Heart left ventricle (tissue), 16 donors: ENCODE measurements at regions of chr2 and their contacts with region 1.

Region 1: DNA sequence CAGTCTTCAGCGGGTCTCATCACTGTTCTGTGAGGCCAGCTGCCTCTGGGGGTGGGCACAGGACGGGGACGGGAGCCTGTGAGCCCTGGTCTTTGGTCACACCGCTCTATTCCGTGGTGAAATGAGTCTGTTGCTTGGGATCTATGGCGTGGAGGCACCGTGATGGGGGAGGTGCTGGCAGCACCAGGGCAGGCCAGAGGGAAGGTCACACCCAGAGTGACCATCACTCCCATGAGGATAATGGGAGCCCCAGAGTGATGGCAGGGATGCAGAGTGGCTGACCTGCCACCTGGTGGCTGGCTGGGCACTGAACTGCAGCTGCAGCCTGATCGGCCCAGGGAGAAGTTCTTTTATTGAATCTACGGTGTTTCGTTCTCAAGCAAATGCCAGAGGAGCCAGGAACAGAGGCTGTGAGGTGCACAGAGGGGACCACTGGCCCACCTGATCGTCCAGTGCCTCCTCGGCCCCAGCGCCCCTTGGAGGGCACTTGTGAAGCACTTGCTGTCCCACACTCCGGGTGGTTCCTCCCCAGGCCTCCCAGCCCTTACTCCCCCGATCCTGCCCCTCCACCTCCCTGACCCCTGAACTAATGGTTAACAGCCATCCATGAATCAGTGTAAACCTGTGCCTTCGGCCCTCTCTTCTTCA is 17.9 kb downstream of the KCNIP3 start:
- DNase-seq: peak in 1 of 5 donors; percentile 63
- ATAC-seq: peak in 3 of 4 donors; percentile 50 to 64 (median 61)
- H3K4me3 ChIP-seq: no peak overlapping the region
- H3K27ac ChIP-seq: no peak overlapping the region
- H3K4me1 ChIP-seq: no peaks in the 10 kb centered on the region
- H3K27me3 ChIP-seq: peaks cover 0 to 9% (median 0%) of the 10 kb centered on the region in 9 donors
- CTCF ChIP-seq: peak; percentile 33 to 63 (median 54)
- POLR2A ChIP-seq: no peak

Region 2: GRCh38 chr2:95185197-95185596 is 129.9 kb before region 1 on chr2:
- intact Hi-C with region 1: loop called in 3 of 10 experiments (anchors 5 to 10 kb)
- DNase-seq: no peak
- ATAC-seq: no peak
- H3K4me3 ChIP-seq: no peak overlapping the region
- H3K27ac ChIP-seq: no peak overlapping the region
- H3K4me1 ChIP-seq: no peaks in the 10 kb centered on the region
- H3K27me3 ChIP-seq: no peaks in the 10 kb centered on the region
- CTCF ChIP-seq: no peak
- POLR2A ChIP-seq: no peak

Region 3: DNA sequence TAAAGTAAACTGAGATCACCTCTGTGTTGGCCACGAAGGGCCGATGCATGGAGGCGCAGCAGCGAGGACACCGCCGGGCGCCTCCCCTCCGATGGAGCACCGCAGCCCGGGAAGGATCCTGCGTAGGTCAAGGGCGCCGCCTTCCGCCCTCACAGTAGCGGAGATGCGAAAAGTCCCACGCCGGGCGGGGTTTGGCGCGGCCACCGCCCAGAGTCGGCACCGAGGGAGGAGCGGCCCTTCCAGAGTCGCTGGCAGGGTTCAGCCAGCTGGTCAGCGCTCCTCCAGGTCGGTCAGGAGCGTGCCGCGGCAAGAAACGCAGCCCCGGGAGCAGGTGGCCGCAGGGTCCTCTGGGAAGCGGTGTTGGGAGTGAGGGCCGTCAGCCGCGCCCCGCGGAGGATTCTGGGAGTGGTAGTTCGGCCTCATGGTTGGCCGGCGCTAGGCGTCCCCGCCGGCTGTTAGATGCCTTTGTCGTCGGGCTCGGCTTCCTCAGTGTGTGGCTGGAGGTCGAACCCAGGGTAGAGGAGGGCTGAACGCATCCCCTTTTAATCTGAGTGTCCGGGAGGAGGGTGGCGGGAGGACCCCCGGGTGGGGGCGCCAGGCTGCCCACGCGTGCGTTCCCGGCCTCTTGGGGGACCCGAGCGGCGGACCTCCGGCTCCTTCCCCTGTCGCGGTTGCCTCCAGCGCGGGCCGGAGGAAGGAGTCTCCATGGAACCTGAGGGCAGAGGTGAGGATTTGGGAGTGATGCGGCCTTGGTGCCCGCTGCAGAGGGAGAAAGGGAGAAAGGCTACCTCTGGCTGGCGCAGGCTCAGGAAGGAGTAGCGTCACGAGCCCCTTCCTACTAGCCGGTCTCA is 107.8 kb before region 1 on chr2 and contains the start of gene ZNF892:
- intact Hi-C with region 1: no loop called
- DNase-seq: peak; percentile 91 to 95 (median 94)
- ATAC-seq: peak; percentile 97 to 99 (median 99)
- H3K4me3 ChIP-seq: peak within 1 kb of the TSS; percentile 57 to 94 (median 78)
- H3K27ac ChIP-seq: peak within 1 kb of the TSS; percentile 19 to 96 (median 92)
- H3K4me1 ChIP-seq: peaks cover 0 to 21% (median 10%) of the 10 kb centered on the region in 12 donors
- H3K27me3 ChIP-seq: no peaks in the 10 kb centered on the region
- CTCF ChIP-seq: peak in 11 of 12 donors; percentile 12 to 70 (median 53)
- POLR2A ChIP-seq: peak in 1 of 2 donors; percentile 67
- total RNA-seq, gene ZNF892: 2.0 to 4.9 (median 3.7) TPM

Region 4: DNA sequence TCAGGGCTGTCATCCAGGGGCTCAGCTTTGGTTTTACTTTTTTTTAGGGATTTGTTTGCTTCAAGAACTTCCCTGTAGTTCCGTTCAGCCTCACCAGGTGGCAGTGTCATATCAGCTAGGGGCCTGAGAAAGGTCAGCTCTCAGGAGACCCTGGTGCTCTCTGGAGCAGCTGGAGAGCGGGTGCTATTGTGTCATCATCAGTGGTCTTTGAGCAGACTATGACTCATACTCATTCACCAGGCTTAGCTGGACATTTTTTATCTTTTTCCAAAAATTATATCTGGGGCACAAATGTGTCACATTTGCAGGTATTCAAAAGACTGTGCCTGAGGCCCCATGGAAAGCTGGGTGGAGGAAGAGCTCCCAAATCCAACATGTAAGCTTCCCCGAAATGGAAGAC is 83.4 kb before region 1 on chr2:
- intact Hi-C with region 1: loop called (anchors 1 to 10 kb)
- DNase-seq: peak in 2 of 5 donors; percentile 40
- ATAC-seq: peak in 1 of 4 donors; percentile 44
- H3K4me3 ChIP-seq: no peak overlapping the region
- H3K27ac ChIP-seq: no peak overlapping the region
- H3K4me1 ChIP-seq: no peaks in the 10 kb centered on the region
- H3K27me3 ChIP-seq: no peaks in the 10 kb centered on the region
- CTCF ChIP-seq: peak; percentile 33 to 64 (median 52)
- POLR2A ChIP-seq: no peak

Region 5: DNA sequence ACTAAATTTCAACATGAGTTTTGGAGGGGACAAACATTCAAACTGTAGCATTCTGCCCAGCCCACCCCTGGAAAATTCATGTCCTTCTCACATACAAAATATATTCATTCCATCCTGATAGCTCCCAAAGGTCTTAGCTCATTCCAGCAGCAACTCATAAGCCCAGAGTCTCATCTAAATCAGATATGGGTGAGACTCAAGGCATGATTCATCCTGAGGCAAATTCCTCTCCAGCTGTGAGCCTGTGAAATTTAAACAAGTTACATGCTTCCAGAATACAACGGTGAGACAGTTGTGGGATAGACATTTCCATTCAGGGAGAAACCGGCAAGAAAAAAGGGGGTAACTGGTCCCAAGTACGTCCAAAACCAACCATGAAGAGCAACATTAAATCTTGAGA is 43.9 kb after region 1 on chr2:
- intact Hi-C with region 1: no loop called
- DNase-seq: no peak
- ATAC-seq: peak in 1 of 4 donors; percentile 71
- H3K4me3 ChIP-seq: no peak overlapping the region
- H3K27ac ChIP-seq: no peak overlapping the region
- H3K4me1 ChIP-seq: peaks cover 0 to 13% (median 0%) of the 10 kb centered on the region in 12 donors
- H3K27me3 ChIP-seq: no peaks in the 10 kb centered on the region
- CTCF ChIP-seq: no peak
- POLR2A ChIP-seq: no peak